Posterior vena cava (tissue), 2 donors: ENCODE measurements at regions of chr10 and their contacts with region 1.

Region 1: DNA sequence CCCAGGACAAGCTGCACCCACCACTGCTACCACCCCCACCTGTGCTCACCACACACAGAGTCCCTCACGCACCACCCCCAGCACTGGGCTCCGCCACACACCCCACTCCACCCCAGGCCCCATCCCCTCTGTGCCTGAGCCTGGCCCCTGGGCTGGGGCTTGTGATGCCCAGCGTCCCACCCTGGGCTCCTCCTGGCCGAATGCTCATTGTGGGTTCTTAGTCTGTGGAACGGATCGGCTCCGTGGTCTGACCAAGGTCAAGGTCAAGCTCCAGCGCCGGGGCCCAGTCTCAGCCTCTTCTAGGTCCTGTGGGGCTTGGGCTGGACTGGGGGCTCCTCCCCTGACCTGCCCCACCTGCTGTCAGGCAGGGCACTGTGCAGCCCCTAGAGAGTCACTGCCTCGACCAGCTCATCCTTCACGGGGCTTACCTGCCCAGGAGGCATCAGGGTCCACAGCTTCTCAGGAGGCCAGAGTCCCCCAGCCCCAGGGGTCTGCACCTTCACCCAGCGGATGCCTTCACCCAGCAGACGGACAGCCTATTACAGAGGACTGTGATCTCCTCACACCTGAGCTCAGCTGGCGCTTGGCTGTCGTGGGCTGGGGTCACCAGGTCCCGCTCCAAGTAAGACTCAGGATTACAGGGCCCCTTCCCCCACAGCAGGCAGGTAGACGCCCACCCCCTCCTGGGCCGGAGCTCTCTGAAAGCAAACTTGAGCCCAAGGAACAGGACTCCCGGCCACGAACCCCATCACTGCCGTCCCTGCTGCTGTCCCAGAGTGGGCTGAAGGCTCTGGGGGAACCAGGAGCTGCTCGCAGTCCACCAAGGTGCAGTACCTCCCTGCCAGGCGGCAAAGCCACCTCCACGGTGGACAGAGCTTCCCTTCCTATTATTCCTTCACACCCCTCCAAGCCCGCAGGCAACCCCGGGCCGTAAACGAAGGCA is 15.3 kb upstream of the UTF1 start:
- DNase-seq: no peak

Region 2: GRCh38 chr10:132094581-132095234 is 1120.0 kb before region 1 on chr10:
- intact Hi-C with region 1: loop called in 1 of 2 experiments (anchors 5 kb)
- DNase-seq: peak; percentile 73

Region 3: DNA sequence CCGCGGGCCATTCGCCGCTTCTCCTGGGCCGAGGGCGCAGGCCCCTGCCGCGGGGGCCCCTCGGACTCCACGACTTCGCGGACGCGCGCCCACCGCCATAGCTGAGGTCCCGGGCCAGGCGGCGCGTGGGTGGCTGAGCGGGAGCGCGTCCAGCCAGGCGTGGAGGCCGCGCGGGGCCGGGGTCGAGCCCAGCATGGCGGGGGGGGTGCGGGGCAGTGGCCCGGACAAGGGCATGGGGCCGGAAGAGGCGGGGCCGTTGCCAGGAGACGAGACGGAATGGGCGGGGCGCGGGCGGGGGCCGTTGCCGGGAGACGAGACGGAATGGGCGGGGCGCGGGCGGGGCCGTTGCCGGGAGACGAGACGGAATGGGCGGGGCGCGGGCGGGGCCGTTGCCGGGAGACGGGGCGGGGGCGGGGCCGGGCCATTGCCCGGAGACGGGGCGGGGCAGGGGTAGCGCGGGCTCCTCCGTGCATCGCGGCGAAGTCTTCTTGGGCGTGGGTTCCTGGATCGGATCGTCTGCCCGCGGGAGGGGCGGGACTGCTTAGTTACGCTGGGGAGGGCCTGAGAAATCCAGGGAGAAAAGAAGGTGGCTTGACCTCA is 47.1 kb after region 1 on chr10:
- intact Hi-C with region 1: no loop called
- DNase-seq: peak; percentile 96